ENCODE measurements at regions of chr17 and their contacts with region 1.

Region 1: DNA sequence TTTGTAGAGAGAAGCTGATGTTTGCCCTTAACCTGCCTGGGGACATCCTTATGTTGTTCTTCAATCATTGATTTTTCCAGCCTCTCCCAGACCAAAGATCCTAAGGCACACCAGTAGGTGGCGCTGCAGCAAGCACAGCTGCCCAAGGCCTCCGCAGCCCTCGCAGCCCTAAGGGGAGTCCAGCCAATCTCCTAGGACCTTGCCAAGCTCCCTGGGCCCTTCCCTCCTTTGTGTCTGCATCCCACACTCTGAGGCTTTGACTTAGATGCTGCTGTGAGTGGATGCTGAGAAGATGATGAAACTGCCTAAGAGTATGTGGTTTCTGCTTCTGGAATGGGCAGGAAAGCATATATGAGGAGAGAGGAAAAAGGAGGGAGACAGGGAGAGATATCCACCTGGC is 47.1 kb downstream of the SPACA3 start:
- DNase-seq: peak; percentile 15
- ATAC-seq: peak; percentile 69
- H3K4me3 ChIP-seq: no peak overlapping the region
- H3K27ac ChIP-seq: no peak overlapping the region
- H3K4me1 ChIP-seq: no peaks in the 10 kb centered on the region
- H3K27me3 ChIP-seq: no peaks in the 10 kb centered on the region
- CTCF ChIP-seq: peak; percentile 59
- POLR2A ChIP-seq: no peak
- RAD21 ChIP-seq: peak; percentile 55

Region 2: DNA sequence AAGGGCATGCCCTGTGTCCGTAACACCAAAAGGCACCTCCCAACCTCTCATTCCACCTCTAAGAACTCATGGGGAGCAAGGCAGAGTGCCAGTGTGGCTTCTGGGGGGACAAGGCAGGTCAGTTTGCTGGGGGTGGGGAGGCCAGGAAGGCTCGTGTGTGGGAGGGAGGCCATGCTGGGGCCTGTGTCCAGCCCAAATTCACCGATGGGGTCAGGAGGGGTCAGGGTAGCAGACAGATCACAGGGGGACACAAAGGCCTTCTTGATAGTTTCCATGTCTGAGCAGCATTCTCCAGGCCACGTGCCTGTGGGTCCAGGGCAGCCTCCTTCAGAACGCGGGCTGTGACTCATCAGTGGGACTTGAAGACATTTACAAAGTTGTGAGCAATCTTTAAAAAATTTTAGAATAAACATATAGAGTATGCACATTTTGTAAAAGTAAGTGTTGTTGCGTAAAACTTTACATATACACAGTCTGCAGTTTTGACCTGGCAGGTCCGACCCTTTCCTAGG is 26.2 kb before region 1 on chr17:
- CTCF ChIA-PET with region 1: no interaction called
- POLR2A ChIA-PET with region 1: no interaction called
- dilution Hi-C with region 1: no loop called
- in situ Hi-C with region 1: no loop called
- intact Hi-C with region 1: no loop called
- DNase-seq: peak; percentile 98
- ATAC-seq: peak; percentile 86
- H3K4me3 ChIP-seq: no peak overlapping the region
- H3K27ac ChIP-seq: peak overlapping the region; percentile 85
- H3K4me1 ChIP-seq: peaks cover 27% of the 10 kb centered on the region
- H3K27me3 ChIP-seq: no peaks in the 10 kb centered on the region
- CTCF ChIP-seq: no peak
- POLR2A ChIP-seq: no peak
- RAD21 ChIP-seq: no peak

Region 3: GRCh38 chr17:33674685-33675084 is 635.9 kb after region 1 on chr17:
- CTCF ChIA-PET with region 1: no interaction called
- POLR2A ChIA-PET with region 1: no interaction called
- dilution Hi-C with region 1: no loop called
- in situ Hi-C with region 1: no loop called
- intact Hi-C with region 1: loop called (anchors 1 kb)
- DNase-seq: peak; percentile 55
- ATAC-seq: peak; percentile 99
- H3K4me3 ChIP-seq: no peak overlapping the region
- H3K27ac ChIP-seq: no peak overlapping the region
- H3K4me1 ChIP-seq: no peaks in the 10 kb centered on the region
- H3K27me3 ChIP-seq: no peaks in the 10 kb centered on the region
- CTCF ChIP-seq: peak; percentile 67
- POLR2A ChIP-seq: no peak
- RAD21 ChIP-seq: peak; percentile 49

Measured in IMR-90 (cell line).